Activated CD4-positive, alpha-beta memory T cell treated with anti-CD3 and anti-CD28 coated beads for 36 hours (primary cell): ENCODE measurements at regions of chr14 and their contacts with region 1.

Region 1: DNA sequence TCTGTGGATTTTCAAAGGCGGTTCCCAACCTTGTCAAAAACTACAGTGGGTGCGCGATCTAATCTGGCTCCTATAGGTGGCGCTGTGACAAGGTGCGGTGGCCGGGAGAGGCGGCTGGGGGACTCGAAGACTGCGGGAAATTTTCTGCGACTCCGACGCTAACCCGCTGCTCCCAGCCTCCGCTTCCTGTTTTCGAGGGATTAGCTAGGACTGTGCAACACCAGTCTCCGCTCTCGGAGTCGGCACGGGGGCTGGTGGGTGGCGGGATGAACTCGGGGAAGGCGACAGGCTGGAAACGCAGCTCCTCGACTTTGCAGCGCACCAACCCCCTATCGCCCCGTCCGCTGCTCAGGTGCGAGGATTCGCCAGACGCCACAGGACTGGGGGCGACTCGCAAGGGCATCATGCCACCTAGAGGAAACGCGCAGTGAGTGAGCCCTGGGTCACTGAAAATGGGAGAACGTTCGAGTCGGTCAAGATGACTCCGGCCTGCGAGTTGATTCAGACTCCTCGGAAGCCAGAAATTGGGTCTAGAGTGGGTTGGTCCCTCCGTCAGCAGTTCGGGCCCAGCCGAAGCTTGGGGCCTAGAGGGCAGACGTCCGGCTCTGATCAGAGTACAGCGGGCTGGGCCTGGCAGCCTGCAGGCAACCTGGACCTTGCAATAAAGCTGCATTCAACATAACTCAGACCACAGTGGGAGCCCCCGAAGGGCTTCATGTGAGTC is 5.5 kb upstream of the PAX9 start:
- DNase-seq: peak; percentile 58
- H3K4me3 Mint-ChIP-seq: peak overlapping the region; percentile 12
- H3K27ac Mint-ChIP-seq: no peak overlapping the region
- H3K4me1 Mint-ChIP-seq: peaks cover 23% of the 10 kb centered on the region
- H3K27me3 Mint-ChIP-seq: peaks cover 78% of the 10 kb centered on the region

Region 2: GRCh38 chr14:36505181-36505815 is 150.8 kb before region 1 on chr14:
- CTCF ChIA-PET with region 1: no interaction called
- POLR2A ChIA-PET with region 1: no interaction called
- intact Hi-C with region 1: loop called (anchors 2 kb)
- DNase-seq: peak; percentile 36
- H3K4me3 Mint-ChIP-seq: no peak overlapping the region
- H3K27ac Mint-ChIP-seq: no peak overlapping the region
- H3K4me1 Mint-ChIP-seq: peaks cover 18% of the 10 kb centered on the region
- H3K27me3 Mint-ChIP-seq: peaks cover 70% of the 10 kb centered on the region

Region 3: GRCh38 chr14:36767603-36768281 is 111.6 kb after region 1 on chr14:
- CTCF ChIA-PET with region 1: no interaction called
- POLR2A ChIA-PET with region 1: no interaction called
- intact Hi-C with region 1: no loop called
- DNase-seq: no peak
- H3K4me3 Mint-ChIP-seq: no peak overlapping the region
- H3K27ac Mint-ChIP-seq: no peak overlapping the region
- H3K4me1 Mint-ChIP-seq: no peaks in the 10 kb centered on the region
- H3K27me3 Mint-ChIP-seq: no peaks in the 10 kb centered on the region